Motor neuron (in vitro differentiated cells): ENCODE measurements at regions of chr19 and their contacts with region 1.

Region 1: DNA sequence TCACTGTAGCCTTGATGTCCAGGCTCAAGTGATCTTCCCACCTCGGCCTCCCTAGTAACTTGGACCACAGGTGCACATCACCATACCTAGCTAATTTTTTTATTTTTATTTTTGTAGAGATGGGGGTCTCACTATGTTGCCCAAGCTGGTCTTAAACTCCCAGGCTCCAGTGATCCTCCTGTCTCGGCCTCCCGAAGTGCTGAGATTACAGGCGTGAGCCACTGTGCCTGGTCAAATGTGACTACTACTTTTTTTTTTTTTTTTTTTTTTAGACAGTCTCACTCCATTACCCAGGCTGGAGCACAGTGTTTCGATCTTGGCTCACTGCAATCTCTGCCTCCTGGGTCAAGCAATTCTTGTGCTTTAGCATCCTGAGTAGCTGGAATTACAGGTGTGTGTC is 20.6 kb upstream of the COX7A1 start:
- ATAC-seq: no peak
- H3K4me3 ChIP-seq: no peak overlapping the region
- H3K27ac ChIP-seq: no peak overlapping the region
- H3K4me1 ChIP-seq: no peaks in the 10 kb centered on the region

Region 2: DNA sequence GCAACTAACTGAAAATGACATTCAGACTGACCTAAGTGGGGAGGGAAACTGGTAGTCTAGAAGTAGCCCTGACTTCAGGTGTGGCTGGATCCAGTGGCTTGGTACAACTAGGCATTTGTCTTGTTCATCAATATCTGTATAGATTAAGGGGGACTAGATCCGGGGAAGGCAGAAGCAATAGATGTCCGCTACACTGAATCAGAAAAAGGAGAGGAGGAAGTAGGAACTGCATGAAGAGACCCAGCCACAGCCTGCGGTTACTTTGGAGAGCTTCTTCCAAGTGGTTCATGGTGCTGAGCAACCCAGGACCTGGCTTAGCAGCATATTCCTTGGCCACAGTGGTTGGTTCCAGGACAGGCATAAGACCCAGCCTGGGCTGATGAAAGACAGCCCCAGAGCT is 350.3 kb before region 1 on chr19:
- in situ Hi-C with region 1: no loop called
- ATAC-seq: no peak
- H3K4me3 ChIP-seq: no peak overlapping the region
- H3K27ac ChIP-seq: no peak overlapping the region
- H3K4me1 ChIP-seq: peaks cover 0 to 7% of the 10 kb centered on the region in 2 donors

Region 3: DNA sequence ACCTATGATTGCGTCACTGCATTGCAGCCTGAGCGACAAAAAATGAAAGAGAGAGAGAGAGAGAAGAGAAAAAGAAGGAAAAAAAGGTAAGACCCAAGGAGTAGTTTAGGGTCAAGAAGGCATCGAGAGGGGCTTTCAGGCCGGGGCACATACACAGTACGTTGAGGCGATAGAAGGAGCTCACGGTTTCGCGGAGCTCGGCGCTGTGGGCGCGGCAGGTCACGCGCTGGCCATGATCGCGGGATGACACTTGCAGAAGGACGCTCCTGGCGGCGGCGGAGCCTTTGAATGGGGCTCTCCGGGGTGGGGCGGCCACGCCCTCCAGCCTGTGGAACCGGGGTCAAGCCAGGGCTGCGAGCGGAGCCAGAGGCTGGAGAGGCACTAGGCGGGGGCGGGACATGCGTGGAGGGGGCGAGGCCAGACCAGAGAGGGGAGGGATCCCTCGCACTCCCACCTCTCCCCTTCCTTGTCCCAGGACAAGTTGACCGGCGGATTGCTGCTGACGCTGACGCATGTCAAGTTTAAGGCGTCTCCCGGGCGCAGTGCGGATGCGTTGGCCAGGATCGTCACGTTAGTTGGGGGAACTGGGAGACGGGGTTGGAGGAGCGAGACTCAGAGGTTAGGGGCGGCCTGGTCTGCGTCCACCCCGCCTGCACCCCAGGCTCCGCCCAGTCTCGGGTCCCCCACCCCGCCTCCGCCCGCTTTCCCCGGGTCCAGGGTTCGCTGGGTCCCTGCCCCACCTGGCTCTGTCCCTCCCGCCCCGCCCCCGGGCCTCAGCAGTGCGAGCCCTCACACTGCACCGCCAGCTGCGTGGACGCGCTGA is 327.4 kb before region 1 on chr19:
- in situ Hi-C with region 1: no loop called
- ATAC-seq: peak; percentile 61 to 85 (median 80)
- H3K4me3 ChIP-seq: peak overlapping the region in 4 of 5 donors; percentile 9 to 30 (median 11)
- H3K27ac ChIP-seq: no peak overlapping the region
- H3K4me1 ChIP-seq: peaks cover 5 to 12% of the 10 kb centered on the region in 2 donors

Region 4: DNA sequence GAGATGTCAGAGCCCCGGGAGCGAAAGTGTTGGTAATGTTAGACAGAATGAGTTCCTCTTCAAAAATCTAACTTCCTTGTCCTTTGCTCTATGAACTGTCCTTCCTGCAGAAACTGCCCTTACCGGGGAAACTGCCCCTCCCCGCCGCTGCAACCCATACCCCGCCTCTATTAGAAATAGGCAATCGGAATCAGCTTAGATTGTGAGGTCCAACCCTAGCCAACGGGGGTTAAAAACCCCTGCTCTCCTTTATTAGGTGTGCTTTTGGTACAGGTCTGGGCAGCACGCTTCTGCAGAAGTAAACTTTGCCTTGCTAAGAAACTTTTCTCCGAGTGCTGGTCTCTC is 44.5 kb before region 1 on chr19:
- in situ Hi-C with region 1: loop called in 1 of 9 experiments (anchors 10 kb)
- ATAC-seq: peak in 7 of 8 experiments; percentile 2 to 8 (median 4)
- H3K4me3 ChIP-seq: peak overlapping the region; percentile 42 to 47 (median 43)
- H3K27ac ChIP-seq: peak overlapping the region; percentile 62 to 79
- H3K4me1 ChIP-seq: peaks cover 0 to 3% of the 10 kb centered on the region in 2 donors